ENCODE measurements at regions of chr6 and their contacts with region 1.

Region 1: GRCh38 chr6:78629836-78630235 is 237.5 kb upstream of the IRAK1BP1 start:
- DNase-seq: no peak
- H3K4me3 ChIP-seq: no peak overlapping the region
- H3K27ac ChIP-seq: no peak overlapping the region
- H3K4me1 ChIP-seq: no peaks in the 10 kb centered on the region
- H3K27me3 ChIP-seq: no peaks in the 10 kb centered on the region
- CTCF ChIP-seq: no peak

Region 2: DNA sequence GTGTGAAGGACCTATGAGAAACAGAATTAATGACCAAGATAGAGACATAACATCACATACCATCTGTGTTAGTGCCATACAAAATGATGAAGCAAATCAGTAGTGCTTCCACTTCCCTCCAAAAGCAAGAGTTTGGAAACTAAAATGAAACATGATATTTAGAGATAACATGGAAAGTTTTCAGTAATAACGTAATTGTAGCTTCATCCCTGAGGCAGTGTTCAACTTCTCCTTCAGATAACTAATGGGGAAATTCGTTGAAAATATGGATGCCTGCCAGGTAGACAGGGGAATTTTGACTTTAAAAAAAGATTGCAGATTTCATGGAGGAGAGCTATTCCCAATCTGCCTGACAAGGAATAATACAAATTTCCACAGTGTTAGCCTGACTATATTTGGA is 10.8 kb before region 1 on chr6:
- CTCF ChIA-PET with region 1: no interaction called
- POLR2A ChIA-PET with region 1: no interaction called
- intact Hi-C with region 1: loop called (anchors 1 kb)
- DNase-seq: no peak
- H3K4me3 ChIP-seq: no peak overlapping the region
- H3K27ac ChIP-seq: no peak overlapping the region
- H3K4me1 ChIP-seq: no peaks in the 10 kb centered on the region
- H3K27me3 ChIP-seq: no peaks in the 10 kb centered on the region
- CTCF ChIP-seq: no peak